ENCODE measurements at regions of chr20 and their contacts with region 1.

Region 1: DNA sequence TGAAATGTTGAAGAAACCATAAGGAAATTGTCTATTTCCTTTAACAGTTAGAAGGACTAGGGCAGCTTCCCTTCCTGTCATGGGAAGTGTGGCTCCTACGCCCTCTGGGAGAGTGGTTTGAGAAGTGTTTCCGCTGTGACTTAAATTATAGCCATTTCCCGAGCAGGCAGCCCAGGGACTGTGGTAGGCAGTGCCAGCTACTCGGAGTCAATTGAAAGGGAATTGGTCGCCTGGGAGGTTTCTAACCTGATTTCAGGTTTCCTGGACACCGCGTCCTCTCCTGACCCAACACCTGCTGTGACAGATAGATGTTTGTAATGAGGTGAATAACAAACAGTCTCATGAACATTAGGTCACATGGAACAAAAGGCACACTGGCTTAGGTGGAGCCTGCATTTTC is 256.1 kb upstream of the PLCB4 start:
- DNase-seq: peak in 4 of 5 donors; percentile 13 to 47 (median 20)
- ATAC-seq: peak; percentile 58 to 88 (median 78)
- H3K4me3 ChIP-seq: no peak overlapping the region
- H3K27ac ChIP-seq: peak overlapping the region in 8 of 12 donors; percentile 16 to 64 (median 34)
- H3K4me1 ChIP-seq: peaks cover 0 to 15% (median 0%) of the 10 kb centered on the region in 12 donors
- H3K27me3 ChIP-seq: no peaks in the 10 kb centered on the region
- CTCF ChIP-seq: no peak
- POLR2A ChIP-seq: no peak

Region 2: DNA sequence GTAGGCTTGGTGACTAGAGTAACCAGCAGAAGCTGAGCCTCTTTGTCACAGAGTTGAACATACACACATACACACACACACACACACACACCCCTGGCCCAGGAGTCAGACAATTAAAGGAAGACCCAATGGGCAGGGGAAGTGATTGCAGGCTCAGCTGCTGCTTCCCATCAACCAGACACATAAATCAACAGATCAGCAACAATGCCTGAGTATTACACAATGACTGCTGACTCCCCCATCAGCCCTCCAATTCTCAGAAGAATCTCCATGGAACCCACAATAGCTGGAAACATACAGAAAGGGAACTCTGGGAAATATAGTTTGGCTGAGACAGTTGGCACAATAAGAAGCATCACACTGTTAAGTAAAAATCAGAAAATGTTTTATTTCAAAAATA is 14.3 kb before region 1 on chr20:
- intact Hi-C with region 1: loop called in 1 of 10 experiments (anchors 1 kb)
- DNase-seq: peak in 3 of 5 donors; percentile 19 to 34 (median 24)
- ATAC-seq: peak in 3 of 4 donors; percentile 53 to 63 (median 61)
- H3K4me3 ChIP-seq: no peak overlapping the region
- H3K27ac ChIP-seq: no peak overlapping the region
- H3K4me1 ChIP-seq: peaks cover 0 to 31% (median 8%) of the 10 kb centered on the region in 12 donors
- H3K27me3 ChIP-seq: no peaks in the 10 kb centered on the region
- CTCF ChIP-seq: no peak
- POLR2A ChIP-seq: no peak

Region 3: GRCh38 chr20:8829256-8829655 is 16.4 kb after region 1 on chr20:
- intact Hi-C with region 1: loop called in 1 of 10 experiments (anchors 1 kb)
- DNase-seq: no peak
- ATAC-seq: no peak
- H3K4me3 ChIP-seq: no peak overlapping the region
- H3K27ac ChIP-seq: no peak overlapping the region
- H3K4me1 ChIP-seq: no peaks in the 10 kb centered on the region
- H3K27me3 ChIP-seq: no peaks in the 10 kb centered on the region
- CTCF ChIP-seq: peak in 2 of 12 donors; percentile 8 to 15
- POLR2A ChIP-seq: no peak

Region 4: DNA sequence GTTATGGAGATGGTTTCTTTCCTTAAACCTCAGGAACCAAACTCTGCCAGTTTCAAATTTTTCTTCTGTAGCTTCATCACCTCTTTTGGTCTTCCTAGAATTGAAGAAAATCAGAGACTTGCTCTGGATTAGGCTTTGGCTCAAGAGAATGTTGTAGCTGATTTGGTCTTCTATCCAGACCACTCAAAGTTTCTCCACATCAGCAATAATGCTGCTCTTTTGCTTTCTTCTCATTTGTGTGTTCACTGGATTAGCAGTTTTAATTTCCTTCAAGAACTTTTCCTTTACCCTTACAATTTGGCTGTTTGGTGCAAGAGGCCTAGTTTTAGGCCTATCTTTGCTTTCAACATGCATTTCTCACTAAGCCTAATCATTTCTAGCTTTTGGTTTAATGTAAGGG is 178.0 kb after region 1 on chr20:
- intact Hi-C with region 1: no loop called
- DNase-seq: no peak
- ATAC-seq: no peak
- H3K4me3 ChIP-seq: no peak overlapping the region
- H3K27ac ChIP-seq: no peak overlapping the region
- H3K4me1 ChIP-seq: peaks cover 0 to 5% (median 3%) of the 10 kb centered on the region in 12 donors
- H3K27me3 ChIP-seq: no peaks in the 10 kb centered on the region
- CTCF ChIP-seq: no peak
- POLR2A ChIP-seq: no peak

Measured in heart left ventricle (tissue), 16 donors.